Left colon (tissue), 2 donors: ENCODE measurements at regions of chr17 and their contacts with region 1.

Region 1: GRCh38 chr17:62703775-62704378 is 76.4 kb downstream of the MRC2 start:
- DNase-seq: peak; percentile 48 to 81
- ATAC-seq: peak; percentile 93

Region 2: GRCh38 chr17:62321451-62321850 is 382.4 kb before region 1 on chr17:
- intact Hi-C with region 1: no loop called
- DNase-seq: no peak
- ATAC-seq: no peak

Region 3: DNA sequence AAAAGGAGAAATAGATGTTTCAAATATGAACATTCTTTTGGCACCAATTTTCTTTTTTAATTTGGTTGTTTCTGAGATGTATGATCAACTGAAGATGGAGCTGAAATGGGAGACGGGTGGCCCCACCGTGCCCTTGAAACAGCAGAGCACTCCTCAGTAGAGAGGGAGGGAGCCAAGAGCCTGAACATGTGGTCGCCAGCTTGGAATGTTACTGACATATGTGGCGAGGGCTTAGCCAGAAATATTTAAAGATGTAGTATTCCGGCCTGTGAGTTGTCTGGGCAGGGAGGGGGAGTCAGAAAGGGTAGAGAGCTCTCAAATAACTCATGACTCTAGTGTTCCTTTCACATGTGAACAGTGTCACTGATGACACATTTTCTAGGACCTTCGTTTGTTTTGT is 89.7 kb before region 1 on chr17:
- intact Hi-C with region 1: no loop called
- DNase-seq: no peak
- ATAC-seq: no peak

Region 4: DNA sequence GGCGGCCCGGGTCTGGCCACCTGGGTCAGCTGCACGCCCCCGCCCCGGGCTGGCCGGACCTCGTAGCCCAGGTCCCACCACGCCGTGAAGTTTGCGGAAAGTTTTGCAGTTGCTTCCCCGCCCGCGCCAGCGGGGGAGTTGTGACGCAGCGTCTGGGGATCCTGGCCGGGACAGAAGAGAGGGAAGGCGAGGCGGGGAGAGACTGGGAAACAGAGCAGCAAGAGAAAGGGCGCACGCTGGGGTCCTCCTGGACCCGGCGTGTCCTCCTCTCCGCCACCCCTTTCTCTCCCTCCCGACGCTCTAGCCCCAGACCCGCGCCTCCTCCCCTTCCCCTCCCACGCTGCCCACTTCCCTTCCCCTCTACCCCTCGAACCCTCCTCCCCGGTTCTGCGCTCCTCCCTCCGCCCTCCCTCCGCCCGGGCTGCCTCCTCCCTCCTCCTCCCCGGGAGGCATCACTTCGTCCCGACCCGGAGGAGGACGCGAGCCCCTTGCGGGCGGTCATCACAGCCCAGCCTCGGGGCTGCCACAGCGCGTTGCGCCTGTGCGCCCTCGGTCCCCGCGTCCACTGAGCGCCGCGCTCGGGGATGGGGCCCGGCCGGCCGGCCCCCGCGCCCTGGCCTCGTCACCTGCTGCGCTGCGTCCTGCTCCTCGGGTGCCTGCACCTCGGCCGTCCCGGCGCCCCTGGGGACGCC is 76.5 kb before region 1 on chr17 and contains the start of gene MRC2:
- intact Hi-C with region 1: no loop called
- DNase-seq: peak; percentile 35 to 37
- ATAC-seq: peak; percentile 33
- total RNA-seq, gene MRC2: 5.1 to 12.4 TPM

Region 5: DNA sequence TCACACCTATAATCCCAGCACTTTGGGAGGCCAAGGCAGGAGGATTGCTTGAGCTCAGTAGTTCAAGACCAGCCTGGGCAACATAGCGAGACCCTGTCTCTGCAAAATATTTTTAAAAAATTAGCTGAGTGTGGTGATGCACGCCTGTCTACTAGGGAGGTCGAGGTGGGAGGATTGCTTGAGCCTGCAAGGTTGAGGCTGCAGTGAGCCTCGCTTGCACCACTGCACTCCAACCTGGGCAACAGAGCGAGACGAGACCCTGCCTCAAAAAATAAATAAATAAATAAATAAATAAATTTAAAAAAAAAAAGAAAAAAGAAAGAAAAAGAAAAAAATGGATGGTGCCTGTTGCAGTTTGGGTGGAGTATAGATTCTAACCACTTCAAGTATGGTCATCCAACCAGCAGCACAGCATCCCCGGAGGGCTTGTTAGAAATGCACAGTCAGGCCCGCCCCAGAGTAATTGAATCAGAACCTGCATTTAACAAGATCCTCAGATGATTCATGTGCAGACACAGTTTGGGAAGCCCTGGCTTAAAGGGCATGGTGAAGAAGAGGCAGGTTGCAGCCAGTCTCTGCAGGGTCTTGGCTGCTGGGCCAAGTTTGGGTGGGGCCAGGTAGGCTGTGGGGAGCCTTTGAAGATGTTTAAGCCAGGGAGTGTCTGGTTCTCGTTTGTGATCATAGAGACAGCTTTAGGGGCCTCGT is 35.6 kb before region 1 on chr17:
- intact Hi-C with region 1: no loop called
- DNase-seq: no peak
- ATAC-seq: no peak

Region 6: GRCh38 chr17:62968445-62968923 is 264.6 kb after region 1 on chr17:
- intact Hi-C with region 1: loop called (anchors 10 kb)
- DNase-seq: peak; percentile 28 to 36
- ATAC-seq: peak; percentile 75